CD4-positive, alpha-beta memory T cell (primary cell): ENCODE measurements at regions of chr3 and their contacts with region 1.

Region 1: GRCh38 chr3:138180375-138181029 is 5.8 kb upstream of the DBR1 start:
- DNase-seq: peak; percentile 29 to 44 (median 38)
- H3K4me3 ChIP-seq: no peak overlapping the region
- H3K4me3 Mint-ChIP-seq: no peak overlapping the region
- H3K27ac ChIP-seq: no peak overlapping the region
- H3K27ac Mint-ChIP-seq: no peak overlapping the region
- H3K4me1 ChIP-seq: no peaks in the 10 kb centered on the region
- H3K4me1 Mint-ChIP-seq: no peaks in the 10 kb centered on the region
- H3K27me3 ChIP-seq: no peaks in the 10 kb centered on the region
- H3K27me3 Mint-ChIP-seq: peaks cover 0 to 3% of the 10 kb centered on the region in 2 donors

Region 2: DNA sequence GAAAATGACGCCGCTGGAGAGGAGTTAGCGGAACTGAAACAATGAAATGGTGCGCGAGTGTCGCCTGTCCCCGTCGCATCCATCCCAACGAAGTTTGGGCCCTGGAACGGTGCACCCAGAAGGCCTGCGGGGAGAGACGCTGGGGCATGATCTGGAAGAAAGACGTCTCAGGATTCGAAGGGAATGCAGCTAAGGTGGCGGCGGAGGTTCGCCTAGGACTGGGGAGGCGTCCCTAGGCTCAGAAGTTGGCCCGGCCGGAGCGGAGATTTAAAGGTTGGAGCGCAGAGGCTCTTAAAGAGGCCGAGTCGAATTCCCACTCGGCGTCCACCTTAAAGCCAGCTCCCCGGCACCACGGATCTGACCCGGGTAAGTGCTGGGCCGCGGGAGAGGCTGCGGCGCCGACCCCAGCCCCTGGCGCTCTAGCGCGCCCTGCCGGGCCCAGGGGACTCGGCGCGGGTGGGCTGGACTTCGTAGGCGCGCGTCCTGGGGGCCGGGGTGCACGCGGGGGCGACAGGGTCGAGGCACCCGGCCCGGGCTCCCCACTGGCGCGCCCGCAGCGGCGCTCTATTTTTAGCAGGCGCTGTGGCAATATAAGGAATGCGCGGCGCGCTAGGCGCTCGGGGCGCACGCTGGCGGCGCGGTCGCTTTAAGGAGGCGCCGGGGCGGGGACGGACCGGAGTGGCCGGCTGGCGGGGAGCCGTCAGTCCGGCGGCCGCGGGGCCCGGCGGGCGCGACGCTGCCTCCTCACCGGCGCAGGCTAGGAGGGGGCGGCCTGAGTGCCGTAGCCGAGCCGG is 167.7 kb after region 1 on chr3 and contains the start of gene MRAS:
- CTCF ChIA-PET with region 1: interaction called, 5 read pairs
- POLR2A ChIA-PET with region 1: no interaction called
- intact Hi-C with region 1: loop called (anchors 1 kb)
- DNase-seq: no peak
- H3K4me3 ChIP-seq: peak within 1 kb of the TSS in 1 of 2 donors; percentile 22
- H3K4me3 Mint-ChIP-seq: peak within 1 kb of the TSS; percentile 85 to 97 (median 92)
- H3K27ac ChIP-seq: no peak within 1 kb of the TSS
- H3K27ac Mint-ChIP-seq: peak within 1 kb of the TSS in 3 of 7 donors; percentile 31 to 88 (median 86)
- H3K4me1 ChIP-seq: no peaks in the 10 kb centered on the region
- H3K4me1 Mint-ChIP-seq: peaks cover 2 to 12% (median 7%) of the 10 kb centered on the region in 4 donors
- H3K27me3 ChIP-seq: no peaks in the 10 kb centered on the region
- H3K27me3 Mint-ChIP-seq: peaks cover 14 to 26% of the 10 kb centered on the region in 2 donors
- total RNA-seq, gene MRAS: 1.3 to 2.0 TPM

Region 3: DNA sequence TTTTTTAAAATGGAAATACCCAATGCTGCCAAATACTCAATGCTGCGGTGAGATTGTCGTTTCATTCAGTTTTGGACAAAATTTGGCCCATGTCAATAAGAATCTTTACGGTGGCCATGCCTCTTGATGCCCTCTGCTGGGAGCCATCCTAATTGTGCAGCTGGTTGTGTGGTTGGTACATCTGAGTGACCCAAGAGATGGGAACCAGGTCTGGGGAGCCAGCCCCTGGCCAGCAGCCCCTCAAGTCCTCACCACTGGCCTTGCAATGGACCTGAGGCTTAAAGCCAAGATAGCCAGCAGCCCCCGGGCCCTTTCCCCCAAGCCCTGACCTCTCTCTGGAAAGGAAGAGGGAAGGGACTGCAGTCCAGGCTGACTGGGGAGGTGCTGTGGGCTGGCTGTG is 217.5 kb after region 1 on chr3:
- CTCF ChIA-PET with region 1: interaction called, 10 read pairs
- POLR2A ChIA-PET with region 1: no interaction called
- intact Hi-C with region 1: no loop called
- DNase-seq: no peak
- H3K4me3 ChIP-seq: no peak overlapping the region
- H3K4me3 Mint-ChIP-seq: no peak overlapping the region
- H3K27ac ChIP-seq: no peak overlapping the region
- H3K27ac Mint-ChIP-seq: no peak overlapping the region
- H3K4me1 ChIP-seq: no peaks in the 10 kb centered on the region
- H3K4me1 Mint-ChIP-seq: no peaks in the 10 kb centered on the region
- H3K27me3 ChIP-seq: no peaks in the 10 kb centered on the region
- H3K27me3 Mint-ChIP-seq: peaks cover 10 to 13% of the 10 kb centered on the region in 2 donors

Region 4: DNA sequence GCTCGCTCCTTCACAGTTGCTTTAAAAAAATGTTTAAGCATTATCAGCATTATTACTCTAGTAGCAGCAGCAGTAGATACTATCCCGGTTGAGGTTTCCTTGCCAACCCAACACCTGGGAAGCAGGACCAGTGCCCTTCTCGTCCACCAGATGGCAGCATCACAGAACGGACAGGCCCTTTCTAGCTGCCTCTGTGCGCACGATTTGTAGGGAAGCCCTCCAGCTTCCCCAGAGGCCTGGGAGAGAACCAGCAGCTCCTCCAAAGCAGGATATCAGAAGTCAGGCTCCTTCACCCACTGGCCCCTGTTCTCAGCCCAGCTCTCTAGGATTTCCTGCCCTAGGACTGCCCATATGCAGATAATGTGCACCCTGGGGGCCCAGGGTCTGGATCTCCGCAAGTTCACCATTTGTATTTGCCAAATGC is 237.1 kb after region 1 on chr3:
- CTCF ChIA-PET with region 1: interaction called, 4 read pairs
- POLR2A ChIA-PET with region 1: no interaction called
- intact Hi-C with region 1: loop called (anchors 5 kb)
- DNase-seq: peak; percentile 38 to 52 (median 40)
- H3K4me3 ChIP-seq: no peak overlapping the region
- H3K4me3 Mint-ChIP-seq: no peak overlapping the region
- H3K27ac ChIP-seq: no peak overlapping the region
- H3K27ac Mint-ChIP-seq: no peak overlapping the region
- H3K4me1 ChIP-seq: no peaks in the 10 kb centered on the region
- H3K4me1 Mint-ChIP-seq: no peaks in the 10 kb centered on the region
- H3K27me3 ChIP-seq: no peaks in the 10 kb centered on the region
- H3K27me3 Mint-ChIP-seq: peaks cover 5 to 14% of the 10 kb centered on the region in 2 donors